CD8-positive, alpha-beta T cell (primary cell): ENCODE measurements at regions of chr19 and their contacts with region 1.

Region 1: DNA sequence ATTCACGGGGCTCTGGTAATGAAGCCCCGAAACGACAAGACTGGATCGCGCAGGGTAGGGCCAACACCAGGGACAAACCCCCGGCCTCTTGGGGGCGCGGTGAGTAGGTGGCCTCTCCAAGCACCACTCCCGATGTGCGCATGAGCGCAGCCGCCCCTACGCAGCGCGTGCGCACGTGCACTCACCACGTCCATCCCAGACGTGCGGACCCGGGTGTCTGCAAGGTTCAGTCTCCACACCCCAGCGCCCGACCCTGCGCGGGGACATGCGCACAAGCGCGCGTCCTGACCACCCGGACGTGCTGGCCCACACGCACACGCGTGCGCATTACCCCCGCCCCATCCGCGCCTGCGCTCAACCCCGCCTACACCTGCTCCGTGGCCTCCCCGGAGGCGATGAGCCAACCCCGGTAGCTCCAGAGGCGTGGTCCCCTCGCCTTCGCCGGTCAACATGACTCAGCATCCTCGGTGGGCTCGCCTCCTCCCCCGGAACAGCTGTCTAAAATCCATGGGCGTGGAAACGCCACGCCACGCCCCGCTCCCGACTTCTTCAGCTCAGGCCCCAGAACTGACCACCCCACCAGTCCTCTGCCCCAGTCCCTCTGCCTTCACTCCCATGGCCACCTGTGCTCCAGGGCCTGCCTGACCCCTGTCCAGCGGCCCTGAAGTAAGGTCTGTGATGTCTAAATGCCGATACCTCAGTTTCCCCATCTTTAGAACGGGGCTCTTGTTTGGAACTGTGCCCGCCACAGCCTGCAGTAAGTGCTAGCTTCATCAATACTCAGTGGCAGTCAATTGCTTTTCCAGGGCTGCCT is 5.6 kb upstream of the GPI start:
- DNase-seq: peak; percentile 80 to 97 (median 93)
- ATAC-seq: peak; percentile 89
- H3K4me3 ChIP-seq: peak overlapping the region; percentile 46 to 52
- H3K4me3 Mint-ChIP-seq: peak overlapping the region; percentile 90
- H3K27ac ChIP-seq: peak overlapping the region; percentile 59 to 77
- H3K27ac Mint-ChIP-seq: peak overlapping the region; percentile 94
- H3K4me1 ChIP-seq: peaks cover 16% of the 10 kb centered on the region
- H3K4me1 Mint-ChIP-seq: peaks cover 27% of the 10 kb centered on the region
- H3K27me3 ChIP-seq: no peaks in the 10 kb centered on the region
- H3K27me3 Mint-ChIP-seq: no peaks in the 10 kb centered on the region
- CTCF ChIP-seq: peak; percentile 63

Region 2: GRCh38 chr19:34404109-34404897 is 45.0 kb after region 1 on chr19 and contains the start of gene PDCD2L:
- CTCF ChIA-PET with region 1: no interaction called
- POLR2A ChIA-PET with region 1: no interaction called
- intact Hi-C with region 1: loop called (anchors 2 kb)
- DNase-seq: peak; percentile 81 to 96 (median 94)
- ATAC-seq: peak; percentile 97
- H3K4me3 ChIP-seq: peak within 1 kb of the TSS; percentile 84 to 98
- H3K4me3 Mint-ChIP-seq: peak within 1 kb of the TSS; percentile 93
- H3K27ac ChIP-seq: peak within 1 kb of the TSS; percentile 49 to 74
- H3K27ac Mint-ChIP-seq: peak within 1 kb of the TSS; percentile 88
- H3K4me1 ChIP-seq: peaks cover 3% of the 10 kb centered on the region
- H3K4me1 Mint-ChIP-seq: peaks cover 20% of the 10 kb centered on the region
- H3K27me3 ChIP-seq: no peaks in the 10 kb centered on the region
- H3K27me3 Mint-ChIP-seq: no peaks in the 10 kb centered on the region
- CTCF ChIP-seq: no peak
- total RNA-seq, gene PDCD2L: 6.1 to 6.5 TPM